Naive thymus-derived CD8-positive, alpha-beta T cell (primary cell): ENCODE measurements at regions of chr2 and their contacts with region 1.

Region 1: DNA sequence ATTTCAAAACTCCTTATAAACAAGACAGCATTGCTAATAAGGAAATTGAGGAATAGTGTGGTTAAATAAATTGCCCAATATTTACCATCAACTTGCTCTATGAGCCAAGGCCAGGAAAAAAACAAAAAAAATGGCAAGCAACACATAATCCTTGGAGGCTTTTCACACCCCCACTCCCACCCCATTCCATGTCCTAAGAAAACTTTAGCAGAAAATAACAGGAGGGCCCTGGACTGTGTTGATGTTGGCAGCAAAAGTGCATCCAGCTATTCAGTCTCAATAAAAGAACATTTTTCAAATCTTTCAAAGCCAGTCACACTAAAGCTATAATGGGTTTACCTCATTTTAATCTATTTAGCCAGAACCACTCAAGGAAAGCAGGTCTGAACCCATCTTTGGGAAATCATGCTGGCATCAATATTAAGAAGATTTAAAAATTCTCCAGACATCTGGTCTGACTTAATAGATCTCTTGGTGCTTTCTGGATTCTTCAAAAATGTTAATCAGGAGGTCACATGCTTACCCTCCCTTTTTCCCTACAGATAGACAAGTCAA is 34.6 kb upstream of the STK17B start:
- DNase-seq: no peak
- ATAC-seq: no peak
- H3K4me3 Mint-ChIP-seq: no peak overlapping the region
- H3K27ac Mint-ChIP-seq: peak overlapping the region in 5 of 10 donors; percentile 26 to 64 (median 33)
- H3K4me1 Mint-ChIP-seq: peaks cover 23 to 62% (median 51%) of the 10 kb centered on the region in 4 donors
- H3K27me3 Mint-ChIP-seq: no peaks in the 10 kb centered on the region

Region 2: GRCh38 chr2:196195302-196195701 is 10.7 kb before region 1 on chr2:
- POLR2A ChIA-PET with region 1: interaction called, 13 read pairs
- DNase-seq: no peak
- ATAC-seq: no peak
- H3K4me3 Mint-ChIP-seq: peak overlapping the region in 3 of 10 donors; percentile 8 to 33 (median 25)
- H3K27ac Mint-ChIP-seq: peak overlapping the region in 6 of 10 donors; percentile 12 to 65 (median 41)
- H3K4me1 Mint-ChIP-seq: peaks cover 23 to 59% (median 42%) of the 10 kb centered on the region in 4 donors
- H3K27me3 Mint-ChIP-seq: no peaks in the 10 kb centered on the region